Colonic mucosa (tissue), 4 donors: ENCODE measurements at regions of chr5 and their contacts with region 1.

Region 1: DNA sequence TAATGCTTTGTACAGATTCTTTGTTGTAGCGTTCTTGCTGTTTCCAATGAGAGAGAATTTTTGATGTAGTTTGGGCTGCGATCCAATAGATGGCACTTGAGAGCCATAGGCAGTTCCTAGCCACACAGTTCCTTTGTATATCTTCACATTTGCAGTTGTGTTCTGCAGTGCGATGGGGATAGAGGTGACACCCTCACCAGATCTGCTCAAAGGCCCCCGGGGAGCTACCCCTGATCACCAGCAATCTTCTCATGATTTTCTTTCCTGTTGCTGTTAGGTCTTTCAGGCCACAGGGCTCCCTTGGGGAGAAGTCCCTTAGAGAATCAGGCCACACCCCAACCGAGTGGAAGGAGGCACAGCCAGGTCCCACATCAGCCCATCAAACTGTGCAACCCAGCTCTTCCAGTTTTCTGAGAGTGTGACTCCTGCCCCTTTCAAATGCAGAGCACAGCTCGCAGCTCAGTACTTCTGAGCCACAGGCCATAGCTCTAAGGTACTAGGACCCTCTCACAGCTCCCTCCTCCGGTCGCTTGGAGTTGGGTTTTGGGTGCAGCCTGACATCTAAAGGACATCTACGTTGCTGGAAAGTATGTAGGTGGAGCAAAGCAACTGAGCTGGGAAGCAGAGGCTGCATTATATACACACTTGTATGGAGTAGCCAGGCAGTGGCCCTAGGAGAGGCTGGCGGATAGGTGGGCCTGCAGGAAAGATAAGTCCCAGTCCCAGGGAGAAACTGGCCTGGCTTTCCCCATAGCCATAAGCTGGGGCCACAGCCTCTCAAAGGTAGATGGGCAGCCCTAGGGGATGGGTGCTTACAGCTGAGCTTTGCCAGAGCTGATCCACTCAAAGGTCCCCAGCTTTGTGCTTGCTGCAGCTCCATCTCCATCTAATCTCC is 353.5 kb downstream of the SLCO4C1 start:
- DNase-seq: peak; percentile 32
- H3K4me3 ChIP-seq: no peak overlapping the region
- H3K27ac ChIP-seq: no peak overlapping the region
- H3K4me1 ChIP-seq: no peaks in the 10 kb centered on the region
- H3K27me3 ChIP-seq: no peaks in the 10 kb centered on the region
- CTCF ChIP-seq: peak; percentile 48

Region 2: GRCh38 chr5:101977729-101978345 is 35.3 kb after region 1 on chr5:
- intact Hi-C with region 1: loop called (anchors 5 kb)
- DNase-seq: no peak
- H3K4me3 ChIP-seq: no peak overlapping the region
- H3K27ac ChIP-seq: no peak overlapping the region
- H3K4me1 ChIP-seq: no peaks in the 10 kb centered on the region
- H3K27me3 ChIP-seq: no peaks in the 10 kb centered on the region
- CTCF ChIP-seq: peak; percentile 43

Region 3: DNA sequence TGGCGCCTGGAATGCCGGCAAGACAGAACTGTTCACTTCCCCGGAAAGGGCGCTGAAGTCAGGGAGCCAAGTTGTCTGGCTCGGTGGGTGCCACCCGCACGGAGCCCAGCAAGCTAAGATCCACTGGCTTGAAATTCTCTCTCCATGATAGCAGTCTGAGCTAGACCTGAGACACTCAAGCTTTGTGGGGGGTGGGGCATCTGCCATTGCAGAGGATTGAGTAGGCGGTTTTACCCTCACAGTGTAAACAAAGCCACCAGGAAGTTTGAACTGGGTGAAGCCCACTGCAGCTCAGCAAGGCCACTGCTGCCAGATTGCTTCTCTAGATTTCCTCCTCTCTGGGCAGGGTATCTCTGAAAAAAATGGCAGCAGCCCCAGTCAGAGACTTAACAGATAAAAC is 76.1 kb after region 1 on chr5:
- intact Hi-C with region 1: no loop called
- DNase-seq: no peak
- H3K4me3 ChIP-seq: no peak overlapping the region
- H3K27ac ChIP-seq: no peak overlapping the region
- H3K4me1 ChIP-seq: no peaks in the 10 kb centered on the region
- H3K27me3 ChIP-seq: no peaks in the 10 kb centered on the region
- CTCF ChIP-seq: no peak

Region 4: DNA sequence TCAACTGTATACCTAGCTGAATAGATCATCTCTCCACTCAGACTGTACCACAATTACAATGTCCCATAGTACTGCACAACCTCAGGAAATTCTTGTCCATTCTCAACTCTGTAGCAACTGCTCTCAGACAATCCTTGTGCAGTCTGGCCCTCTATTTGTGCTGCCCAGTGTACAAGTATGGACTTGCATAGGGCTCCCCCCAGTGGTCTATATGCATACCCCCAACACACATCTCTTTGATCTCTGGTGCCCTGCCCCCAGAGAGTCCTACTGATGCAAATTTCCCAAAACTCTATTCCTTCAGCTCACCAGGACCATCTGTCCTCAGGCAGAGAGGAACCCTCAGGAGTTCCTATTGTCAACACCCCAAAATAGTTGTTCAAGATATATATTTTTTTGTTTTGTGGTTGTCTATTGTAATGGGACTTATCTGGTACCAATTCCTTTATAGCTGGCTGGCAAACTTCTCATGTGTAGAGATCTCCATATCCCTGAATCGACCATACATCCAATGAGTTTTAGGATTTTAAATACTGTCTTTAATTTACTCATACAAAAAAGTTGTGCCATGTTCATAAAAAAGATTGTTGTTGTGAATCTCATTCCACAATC is 148.3 kb after region 1 on chr5:
- intact Hi-C with region 1: no loop called
- DNase-seq: peak; percentile 24
- H3K4me3 ChIP-seq: no peak overlapping the region
- H3K27ac ChIP-seq: no peak overlapping the region
- H3K4me1 ChIP-seq: no peaks in the 10 kb centered on the region
- H3K27me3 ChIP-seq: no peaks in the 10 kb centered on the region
- CTCF ChIP-seq: peak; percentile 27

Region 5: GRCh38 chr5:102153003-102153759 is 210.6 kb after region 1 on chr5:
- intact Hi-C with region 1: loop called (anchors 5 kb)
- DNase-seq: peak; percentile 24
- H3K4me3 ChIP-seq: no peak overlapping the region
- H3K27ac ChIP-seq: peak overlapping the region; percentile 48
- H3K4me1 ChIP-seq: no peaks in the 10 kb centered on the region
- H3K27me3 ChIP-seq: no peaks in the 10 kb centered on the region
- CTCF ChIP-seq: peak; percentile 35

Region 6: GRCh38 chr5:102229685-102230084 is 287.1 kb after region 1 on chr5:
- intact Hi-C with region 1: loop called (anchors 5 kb)
- DNase-seq: no peak
- H3K4me3 ChIP-seq: no peak overlapping the region
- H3K27ac ChIP-seq: no peak overlapping the region
- H3K4me1 ChIP-seq: no peaks in the 10 kb centered on the region
- H3K27me3 ChIP-seq: no peaks in the 10 kb centered on the region
- CTCF ChIP-seq: no peak